OCI-LY7 (cell line): ENCODE measurements at regions of chr5 and their contacts with region 1.

Region 1: GRCh38 chr5:55691265-55692105 is 20.6 kb downstream of the SLC38A9 start:
- DNase-seq: peak; percentile 64
- H3K4me3 ChIP-seq: no peak overlapping the region
- H3K27ac ChIP-seq: no peak overlapping the region
- H3K4me1 ChIP-seq: no peaks in the 10 kb centered on the region
- CTCF ChIP-seq: peak; percentile 91

Region 2: DNA sequence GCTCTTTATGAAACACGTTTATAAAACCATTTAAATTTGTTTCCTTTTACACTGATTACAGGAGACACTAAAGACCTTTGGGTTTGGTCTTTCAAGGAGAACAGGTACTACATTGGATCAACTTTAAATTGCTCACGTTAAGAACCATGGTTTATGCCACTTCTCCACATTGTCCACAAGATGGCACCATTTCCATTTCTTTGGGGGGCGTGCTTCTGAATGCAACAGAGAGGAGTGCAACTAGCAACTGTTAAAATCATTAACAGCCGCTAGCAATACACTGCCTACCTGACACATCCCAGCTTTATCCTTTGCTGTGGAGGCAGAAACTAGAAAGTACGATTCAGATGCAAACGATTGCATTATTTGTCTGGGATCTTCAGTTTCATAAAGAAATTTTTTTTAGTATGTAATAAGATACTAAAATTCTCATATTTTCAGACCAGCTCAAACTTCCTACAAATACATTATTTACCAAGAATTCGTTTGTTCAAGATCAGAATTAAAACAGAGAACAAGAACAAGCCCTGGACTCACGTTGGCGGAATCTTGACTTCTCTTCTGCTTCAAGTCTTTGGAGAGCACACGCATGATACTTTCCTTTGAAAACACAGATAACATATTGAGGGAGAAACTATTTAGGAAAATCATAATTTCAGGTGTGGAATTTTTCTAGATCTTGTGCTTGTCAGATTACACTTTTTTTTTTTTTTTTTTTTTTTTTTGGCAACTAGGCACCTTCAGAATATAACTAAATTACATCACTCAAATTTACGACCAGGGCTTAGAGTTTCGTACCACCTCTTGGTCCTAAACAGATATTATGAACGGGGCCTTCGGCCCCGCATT is 519.2 kb before region 1 on chr5:
- CTCF ChIA-PET with region 1: no interaction called
- POLR2A ChIA-PET with region 1: no interaction called
- intact Hi-C with region 1: loop called (anchors 1 kb)
- DNase-seq: peak; percentile 85
- H3K4me3 ChIP-seq: peak overlapping the region; percentile 67
- H3K27ac ChIP-seq: no peak overlapping the region
- H3K4me1 ChIP-seq: peaks cover 29% of the 10 kb centered on the region
- CTCF ChIP-seq: peak; percentile 95

Region 3: DNA sequence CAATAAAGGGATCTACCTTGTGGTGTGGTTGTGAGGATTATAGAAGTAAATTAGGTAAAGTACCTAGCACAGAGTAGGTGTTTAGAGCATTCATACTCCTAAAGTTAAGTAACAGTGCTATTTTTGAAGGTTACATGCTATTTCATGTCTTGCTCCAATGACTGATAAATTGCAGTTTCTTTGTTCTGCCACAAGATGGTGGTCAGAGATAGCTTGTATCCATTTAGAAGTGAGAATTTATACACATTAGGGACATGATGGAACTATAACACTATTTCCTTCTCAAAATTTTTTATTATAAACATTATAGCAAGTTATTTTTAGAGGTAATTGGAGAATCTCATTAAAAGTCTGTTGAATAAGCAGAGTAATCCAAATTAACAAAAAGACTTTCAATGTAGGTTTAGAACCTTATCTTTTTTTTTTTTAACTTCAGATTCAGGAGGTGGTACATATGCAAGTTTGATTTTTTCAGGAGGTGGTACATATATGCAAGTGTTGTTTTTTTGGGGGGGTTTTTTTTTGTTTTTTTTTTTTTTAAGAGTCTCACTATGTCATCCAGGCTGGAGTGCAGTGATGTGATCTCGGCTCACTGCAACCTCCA is 366.6 kb before region 1 on chr5:
- CTCF ChIA-PET with region 1: no interaction called
- POLR2A ChIA-PET with region 1: interaction called, 5 read pairs
- intact Hi-C with region 1: loop called (anchors 5 kb)
- DNase-seq: peak; percentile 41
- H3K4me3 ChIP-seq: no peak overlapping the region
- H3K27ac ChIP-seq: no peak overlapping the region
- H3K4me1 ChIP-seq: no peaks in the 10 kb centered on the region
- CTCF ChIP-seq: peak; percentile 79

Region 4: DNA sequence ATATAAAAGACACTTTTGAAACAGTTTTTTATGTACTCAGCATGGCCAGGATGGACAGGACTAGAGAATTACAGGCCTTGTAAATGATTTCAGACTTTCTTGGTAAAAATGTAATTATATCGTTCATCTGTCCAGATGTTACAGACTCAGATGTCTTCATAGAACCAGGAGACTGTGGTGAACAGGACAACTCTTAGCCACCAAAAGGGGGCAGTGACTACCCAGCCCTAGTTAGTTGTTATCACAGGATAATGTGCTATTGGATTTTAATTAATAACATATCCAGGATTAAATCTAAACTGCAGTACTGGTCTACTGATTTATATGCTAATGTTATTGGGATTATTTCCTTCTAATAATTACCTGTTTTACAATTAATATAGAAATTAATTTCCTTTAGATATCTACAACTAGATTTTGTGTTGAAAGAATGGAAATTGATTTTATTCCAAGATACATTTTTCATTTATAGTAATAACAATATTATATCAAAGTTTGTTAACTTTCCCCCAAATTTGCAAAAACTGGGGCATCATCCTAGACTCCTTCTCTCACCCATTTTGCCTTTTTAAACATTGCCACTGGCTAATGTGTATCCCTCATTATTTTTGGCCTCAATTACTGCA is 284.3 kb before region 1 on chr5:
- CTCF ChIA-PET with region 1: no interaction called
- POLR2A ChIA-PET with region 1: interaction called, 3 read pairs
- intact Hi-C with region 1: loop called (anchors 2 kb)
- DNase-seq: peak; percentile 11
- H3K4me3 ChIP-seq: no peak overlapping the region
- H3K27ac ChIP-seq: no peak overlapping the region
- H3K4me1 ChIP-seq: no peaks in the 10 kb centered on the region
- CTCF ChIP-seq: peak; percentile 73

Region 5: GRCh38 chr5:55534436-55535198 is 156.9 kb before region 1 on chr5 and contains the start of gene PLPP1:
- CTCF ChIA-PET with region 1: no interaction called
- POLR2A ChIA-PET with region 1: no interaction called
- intact Hi-C with region 1: loop called (anchors 5 kb)
- DNase-seq: peak; percentile 80
- H3K4me3 ChIP-seq: peak within 1 kb of the TSS; percentile 84
- H3K27ac ChIP-seq: peak within 1 kb of the TSS; percentile 8
- H3K4me1 ChIP-seq: peaks cover 31% of the 10 kb centered on the region
- CTCF ChIP-seq: no peak
- total RNA-seq, gene PLPP1: 2.3 and 2.5 TPM in 2 replicates